ENCODE measurements at regions of chr5 and their contacts with region 1.

Region 1: DNA sequence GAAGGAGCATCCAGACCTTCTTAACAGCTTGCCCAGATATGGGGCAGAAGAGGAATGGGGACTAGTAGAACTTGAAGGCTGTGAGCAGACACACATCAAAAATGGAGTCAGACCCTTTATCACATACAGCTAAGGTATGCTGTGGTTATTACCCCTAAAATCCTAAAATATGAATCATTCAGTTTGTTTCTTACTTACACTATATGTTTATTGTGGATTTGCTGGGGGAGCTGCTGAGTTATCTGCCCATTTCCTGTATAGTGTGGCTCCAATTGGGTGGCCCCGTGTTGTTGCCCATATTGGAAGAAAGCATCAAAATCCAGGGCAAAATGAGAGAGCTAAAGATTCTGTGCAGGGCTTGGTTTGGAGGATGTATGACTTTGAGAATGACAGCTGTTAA is 56.9 kb downstream of the AP3S1 start:
- DNase-seq: no peak
- ATAC-seq: no peak

Region 2: DNA sequence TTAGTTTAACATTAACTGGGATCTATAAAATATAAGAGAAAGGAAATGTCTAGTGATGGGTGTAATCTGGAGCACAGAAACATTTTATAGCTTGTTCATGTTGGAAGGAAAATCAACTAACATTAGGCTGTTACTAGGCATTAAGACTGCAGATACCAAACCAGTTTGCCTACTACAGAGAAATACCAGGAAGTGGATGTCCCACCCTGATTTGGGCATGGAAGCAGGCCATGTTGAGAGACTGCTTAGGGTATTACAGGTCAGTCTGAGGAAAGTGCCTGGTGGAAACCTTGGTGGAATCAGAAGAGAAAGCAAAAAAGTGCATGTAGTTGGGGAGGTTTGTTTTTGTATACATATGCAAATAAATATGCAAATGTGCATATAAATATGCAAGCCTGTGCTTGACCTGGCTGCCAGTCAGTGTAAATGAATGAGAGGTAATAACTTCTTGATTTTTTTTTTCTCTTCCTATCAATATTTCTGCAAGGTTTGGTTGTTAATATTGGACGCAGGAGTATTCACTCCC is 592.6 kb before region 1 on chr5:
- intact Hi-C with region 1: no loop called
- DNase-seq: no peak
- ATAC-seq: no peak

Region 3: DNA sequence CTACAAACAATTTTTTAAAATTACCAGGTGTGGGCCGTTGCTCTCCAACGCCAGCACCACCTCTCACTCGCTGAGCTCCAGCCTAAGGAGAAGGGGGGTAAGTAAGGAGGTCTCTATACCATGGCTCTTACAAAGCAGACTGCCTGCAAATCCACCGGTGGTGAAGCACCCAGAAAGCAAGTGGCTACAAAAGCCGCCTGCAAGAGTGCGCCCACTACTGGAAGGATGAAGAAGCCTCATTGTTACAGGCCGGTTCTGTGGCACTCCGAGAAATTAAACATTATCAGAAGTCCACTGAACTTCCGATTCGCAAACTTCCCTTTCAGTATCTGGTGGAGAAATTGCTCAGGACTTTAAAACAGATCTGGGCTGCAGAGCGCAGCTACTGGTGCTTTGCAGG is 128.2 kb before region 1 on chr5:
- intact Hi-C with region 1: no loop called
- DNase-seq: no peak
- ATAC-seq: no peak

Region 4: GRCh38 chr5:116032094-116032517 is 133.4 kb after region 1 on chr5 and contains the start of gene ARL14EPL:
- intact Hi-C with region 1: loop called (anchors 10 kb)
- DNase-seq: no peak
- ATAC-seq: peak; percentile 75
- total RNA-seq, gene ARL14EPL: not detected

Region 5: GRCh38 chr5:116076496-116076895 is 177.8 kb after region 1 on chr5:
- intact Hi-C with region 1: no loop called
- DNase-seq: no peak
- ATAC-seq: peak; percentile 16

Measured in Right ventricle myocardium inferior (tissue), 1 donor.